ENCODE measurements at regions of chr20 and their contacts with region 1.

Region 1: GRCh38 chr20:21808863-21809664 is 103.6 kb downstream of the PAX1 start:
- H3K4me3 Mint-ChIP-seq: no peak overlapping the region
- H3K27ac Mint-ChIP-seq: no peak overlapping the region
- H3K4me1 Mint-ChIP-seq: no peaks in the 10 kb centered on the region
- H3K27me3 Mint-ChIP-seq: no peaks in the 10 kb centered on the region

Region 2: DNA sequence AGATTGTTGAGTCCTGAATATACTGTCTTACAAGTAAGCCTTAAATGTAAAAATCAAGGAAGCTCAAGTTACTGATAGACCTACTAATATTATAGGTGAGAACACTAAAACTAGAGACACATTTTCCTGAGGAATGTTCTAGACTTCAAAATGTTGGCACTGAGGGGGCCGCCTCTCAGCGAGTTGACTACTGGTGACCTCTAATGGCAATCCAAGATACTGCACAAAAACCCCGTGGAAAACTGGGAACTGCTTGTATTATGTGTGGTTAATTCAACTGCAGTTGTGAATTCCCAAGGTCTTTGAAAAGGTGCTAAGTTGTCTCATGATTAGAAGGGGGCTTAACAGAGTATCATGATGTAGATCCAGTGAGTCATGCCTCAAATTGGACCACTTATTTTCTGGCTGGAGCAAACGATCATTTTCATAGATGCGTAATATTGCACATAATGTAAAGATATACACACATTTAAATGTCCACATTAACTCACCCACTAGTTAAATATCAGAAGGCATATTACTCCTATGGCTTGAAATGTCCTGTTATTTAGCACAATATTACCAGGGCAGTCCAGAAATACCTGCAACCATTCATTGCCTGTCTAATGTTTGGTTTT is 439.1 kb after region 1 on chr20:
- intact Hi-C with region 1: loop called (anchors 2 kb)
- H3K4me3 Mint-ChIP-seq: no peak overlapping the region
- H3K27ac Mint-ChIP-seq: no peak overlapping the region
- H3K4me1 Mint-ChIP-seq: no peaks in the 10 kb centered on the region
- H3K27me3 Mint-ChIP-seq: peaks cover 4% of the 10 kb centered on the region

Region 3: DNA sequence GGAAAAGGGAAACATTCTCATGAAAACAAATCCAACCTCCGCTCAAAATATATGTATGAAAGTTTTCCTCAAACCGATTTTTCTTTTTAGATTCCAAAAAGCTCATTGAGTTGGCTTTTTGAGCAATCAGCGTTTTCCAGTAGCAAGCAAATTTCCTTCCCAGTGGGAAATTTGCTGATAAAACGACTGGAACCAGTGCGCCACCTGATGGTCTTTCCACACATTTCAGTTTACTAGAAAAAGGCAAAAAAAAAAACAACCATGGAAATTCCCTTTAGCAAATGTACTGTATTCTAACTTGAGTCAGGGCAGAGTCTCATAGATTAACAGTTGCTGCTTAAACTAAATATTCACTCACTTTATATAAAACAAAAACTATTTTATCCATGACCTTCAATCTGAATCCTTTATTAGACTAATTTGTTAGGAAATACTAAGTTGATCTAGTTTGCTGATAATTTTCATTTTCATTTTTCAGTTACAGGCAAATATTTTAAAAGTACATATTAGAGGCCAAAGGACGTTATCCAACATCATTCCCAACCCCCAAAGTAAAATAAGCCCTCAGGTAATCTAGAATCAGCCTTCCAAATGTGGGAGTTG is 503.8 kb after region 1 on chr20:
- intact Hi-C with region 1: loop called (anchors 2 kb)
- H3K4me3 Mint-ChIP-seq: no peak overlapping the region
- H3K27ac Mint-ChIP-seq: no peak overlapping the region
- H3K4me1 Mint-ChIP-seq: no peaks in the 10 kb centered on the region
- H3K27me3 Mint-ChIP-seq: peaks cover 11% of the 10 kb centered on the region

Measured in dendritic cell treated with granulocyte-macrophage colony-stimulating factor and Interleukin-4, amounts not matched to agents 40 ng/mL and 50 ng/mL, for 4 days (primary cell).